SK-N-SH (cell line): ENCODE measurements at regions of chr16 and their contacts with region 1.

Region 1: DNA sequence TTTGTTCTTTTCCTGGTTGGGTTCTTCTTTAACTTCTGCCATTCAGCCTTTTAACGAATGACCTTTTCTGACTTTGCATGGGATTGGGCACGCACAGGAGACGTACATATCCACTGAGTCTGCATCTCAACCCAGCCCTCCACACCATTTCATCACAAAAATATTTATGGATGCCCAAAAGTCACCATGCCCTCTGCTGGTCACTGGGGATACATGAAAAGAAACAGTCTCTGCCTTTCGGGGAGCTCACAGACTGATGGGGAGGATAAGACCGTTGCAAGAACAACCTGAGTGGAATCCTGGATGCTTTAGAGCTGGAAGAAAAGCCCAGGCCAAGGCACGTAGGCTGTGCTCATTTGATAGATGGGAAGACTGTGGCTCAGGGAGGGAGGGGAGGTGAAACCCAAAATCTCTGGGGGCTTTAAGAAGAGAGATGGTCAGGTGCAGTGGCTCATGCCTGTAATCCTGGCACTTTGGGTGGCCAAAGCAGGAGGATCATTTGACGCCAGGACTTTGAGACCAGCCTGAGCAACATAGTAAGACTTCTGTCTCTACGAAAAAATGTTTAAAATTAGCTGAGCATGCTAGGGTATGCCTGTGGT is 7.9 kb upstream of the MT2A start:
- DNase-seq: peak; percentile 72
- H3K4me3 ChIP-seq: peak overlapping the region in 1 of 2 experiments; percentile 6; a peak in 1 of 4 replicates
- H3K27ac ChIP-seq: no peak overlapping the region
- H3K4me1 ChIP-seq: no peaks in the 10 kb centered on the region; a peak in 1 of 4 replicates
- H3K27me3 ChIP-seq: no peaks in the 10 kb centered on the region
- CTCF ChIP-seq: peak; percentile 83
- EP300 ChIP-seq: no peak
- RAD21 ChIP-seq: peak; percentile 69

Region 2: DNA sequence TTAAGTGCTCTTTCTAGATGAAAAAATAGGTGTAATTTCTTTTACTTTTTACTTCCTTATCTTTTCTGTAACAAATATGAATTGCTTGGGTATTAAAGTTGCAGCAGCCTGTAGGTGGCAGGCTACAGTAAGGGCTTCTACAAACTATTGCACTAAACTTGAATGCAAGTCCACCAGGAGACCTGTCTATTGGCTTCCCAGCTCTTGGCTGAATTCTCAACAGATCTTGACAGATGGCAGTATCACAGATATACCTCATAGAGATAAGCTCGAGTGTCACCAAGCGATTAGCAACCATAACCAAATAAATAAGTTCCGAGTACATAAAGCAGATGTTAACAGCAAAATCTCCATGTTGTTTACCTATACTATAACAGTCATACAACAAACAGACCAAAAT is 86.5 kb before region 1 on chr16:
- CTCF ChIA-PET with region 1: interaction called, 23 read pairs
- POLR2A ChIA-PET with region 1: no interaction called
- DNase-seq: peak; percentile 37
- H3K4me3 ChIP-seq: no peak overlapping the region
- H3K27ac ChIP-seq: no peak overlapping the region
- H3K4me1 ChIP-seq: peaks cover 7 to 17% of the 10 kb centered on the region in 2 experiments; a peak in 3 of 4 replicates
- H3K27me3 ChIP-seq: no peaks in the 10 kb centered on the region
- CTCF ChIP-seq: peak; percentile 79
- EP300 ChIP-seq: no peak
- RAD21 ChIP-seq: peak; percentile 72

Region 3: DNA sequence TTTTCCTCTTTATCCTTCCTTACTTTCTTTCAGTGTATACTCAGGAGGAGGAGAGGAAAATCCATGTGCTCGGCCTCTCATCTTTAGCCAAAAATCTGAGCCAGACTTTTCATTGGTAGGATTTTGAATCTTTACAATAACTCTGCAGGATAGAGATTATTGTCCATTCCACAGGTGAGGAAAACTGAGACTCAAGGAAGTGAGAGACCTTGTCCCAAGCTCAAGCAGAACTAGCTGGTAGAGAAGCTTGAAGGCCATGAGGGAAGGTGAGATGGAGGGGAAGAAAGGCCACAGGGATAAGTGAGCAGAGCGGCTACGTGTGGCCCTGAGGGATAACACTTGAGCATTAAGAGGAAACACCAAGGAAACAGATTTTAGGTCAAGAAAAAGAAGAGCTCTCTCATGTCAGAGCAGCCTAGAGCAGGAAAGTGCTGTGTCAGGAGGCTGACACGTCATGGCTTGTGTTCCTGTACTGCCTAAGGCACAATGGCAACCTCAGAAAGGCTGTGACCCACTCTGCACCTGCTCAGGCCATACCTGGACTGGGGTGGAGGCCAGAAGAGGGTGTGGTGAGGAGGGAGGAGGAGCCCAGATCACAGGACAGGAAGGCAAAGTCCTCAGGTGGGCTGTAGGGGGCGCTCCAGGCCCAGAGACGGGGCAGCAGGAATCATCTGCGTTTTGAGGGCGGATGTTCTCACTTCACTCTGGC is 23.8 kb before region 1 on chr16:
- CTCF ChIA-PET with region 1: interaction called, 11 read pairs
- POLR2A ChIA-PET with region 1: interaction called, 3 read pairs
- DNase-seq: peak; percentile 63
- H3K4me3 ChIP-seq: no peak overlapping the region
- H3K27ac ChIP-seq: no peak overlapping the region
- H3K4me1 ChIP-seq: no peaks in the 10 kb centered on the region
- H3K27me3 ChIP-seq: no peaks in the 10 kb centered on the region
- CTCF ChIP-seq: peak; percentile 53
- EP300 ChIP-seq: no peak
- RAD21 ChIP-seq: peak; percentile 73

Region 4: GRCh38 chr16:56589141-56590039 is 11.1 kb before region 1 on chr16 and contains the start of gene MT3:
- CTCF ChIA-PET with region 1: interaction called, 28 read pairs
- POLR2A ChIA-PET with region 1: no interaction called
- DNase-seq: peak; percentile 64
- H3K4me3 ChIP-seq: peak within 1 kb of the TSS; percentile 49 to 74
- H3K27ac ChIP-seq: no peak within 1 kb of the TSS
- H3K4me1 ChIP-seq: peaks cover 0 to 8% of the 10 kb centered on the region in 2 experiments; a peak in 1 of 4 replicates
- H3K27me3 ChIP-seq: no peaks in the 10 kb centered on the region; the same call in 1 of the 2 replicates
- CTCF ChIP-seq: no peak
- EP300 ChIP-seq: no peak
- RAD21 ChIP-seq: no peak
- polyA plus RNA-seq, gene MT3: 0.43 TPM in 1 of 2 replicates, not detected in the other

Region 5: DNA sequence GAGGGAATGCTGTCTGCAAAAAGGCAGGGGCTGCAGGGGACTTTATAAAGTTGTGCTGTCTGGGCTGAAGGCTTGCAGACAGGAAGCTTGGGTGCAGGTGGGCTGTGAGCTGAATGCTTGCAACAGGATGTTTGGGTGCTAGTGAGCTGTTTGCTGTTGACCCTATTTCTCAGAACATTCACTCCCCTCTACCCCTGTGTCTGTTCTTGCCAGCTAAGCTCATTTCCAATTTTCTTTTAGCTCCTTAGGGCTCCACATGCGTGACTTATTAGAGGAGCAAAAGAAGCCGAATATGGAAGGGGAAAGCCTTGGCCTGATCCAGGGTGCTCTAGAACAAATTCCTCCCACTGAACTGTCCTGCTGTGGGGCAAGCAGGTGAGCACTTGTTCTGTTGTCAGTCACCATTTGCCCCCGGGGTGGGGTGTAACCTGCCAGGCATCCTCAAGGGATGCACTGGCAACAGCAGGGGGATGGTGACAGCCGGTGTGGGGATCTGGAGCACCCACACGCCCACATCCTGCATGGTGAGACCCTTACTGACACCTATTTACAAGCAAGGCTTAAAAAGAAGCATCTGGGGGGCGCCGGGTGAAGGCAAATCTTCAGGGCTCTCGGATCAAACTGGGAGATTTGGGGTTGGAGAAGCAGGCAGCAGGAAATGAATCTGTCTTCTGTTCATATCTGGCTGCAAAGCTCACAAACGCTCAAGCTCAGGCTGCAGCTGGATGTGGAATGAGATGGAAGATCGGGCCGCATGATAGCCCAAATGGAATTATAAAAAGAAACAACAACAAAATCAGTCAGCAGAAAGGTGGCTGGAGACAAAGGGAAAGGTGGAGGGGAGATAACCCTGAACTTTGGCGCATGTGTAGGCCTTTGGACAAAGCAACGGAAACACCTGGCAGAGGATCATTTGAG is 108.3 kb after region 1 on chr16:
- CTCF ChIA-PET with region 1: interaction called, 138 read pairs
- POLR2A ChIA-PET with region 1: no interaction called
- DNase-seq: peak; percentile 52
- H3K4me3 ChIP-seq: no peak overlapping the region
- H3K27ac ChIP-seq: 0 out of 4 replicates have a peak overlapping the region, but pooled peaks of 1 of the 2 experiments have one; percentile 19
- H3K4me1 ChIP-seq: peaks cover 0 to 15% of the 10 kb centered on the region in 2 experiments; a peak in 2 of 4 replicates
- H3K27me3 ChIP-seq: no peaks in the 10 kb centered on the region
- CTCF ChIP-seq: no peak
- EP300 ChIP-seq: no peak
- RAD21 ChIP-seq: no peak

Region 6: GRCh38 chr16:57265850-57266530 is 665.5 kb after region 1 on chr16:
- CTCF ChIA-PET with region 1: no interaction called
- POLR2A ChIA-PET with region 1: no interaction called
- DNase-seq: peak; percentile 91
- H3K4me3 ChIP-seq: peak overlapping the region in 1 of 2 experiments; percentile 25; a peak in 1 of 4 replicates
- H3K27ac ChIP-seq: peak overlapping the region in 1 of 2 experiments; percentile 57; a peak in 1 of 4 replicates
- H3K4me1 ChIP-seq: peaks cover 0 to 41% of the 10 kb centered on the region in 2 experiments; a peak in 2 of 4 replicates
- H3K27me3 ChIP-seq: no peaks in the 10 kb centered on the region
- CTCF ChIP-seq: no peak
- EP300 ChIP-seq: peak in 1 of 2 experiments; percentile 30; a peak in 1 of 4 replicates
- RAD21 ChIP-seq: 0 out of 2 replicates have a peak, but pooled peaks have one; percentile 19